Activated CD4-positive, alpha-beta memory T cell treated with anti-CD3 and anti-CD28 coated beads, Interleukin-2, amount 10 ng/mL, durations not matched to agents 7 days and 5 days (primary cell): ENCODE measurements at regions of chr18 and their contacts with region 1.

Region 1: GRCh38 chr18:12890506-12890905 is 6.5 kb upstream of the PTPN2 start:
- DNase-seq: no peak
- H3K4me3 Mint-ChIP-seq: no peak overlapping the region
- H3K27ac Mint-ChIP-seq: no peak overlapping the region
- H3K4me1 Mint-ChIP-seq: peaks cover 17% of the 10 kb centered on the region
- H3K27me3 Mint-ChIP-seq: peaks cover 11% of the 10 kb centered on the region

Region 2: DNA sequence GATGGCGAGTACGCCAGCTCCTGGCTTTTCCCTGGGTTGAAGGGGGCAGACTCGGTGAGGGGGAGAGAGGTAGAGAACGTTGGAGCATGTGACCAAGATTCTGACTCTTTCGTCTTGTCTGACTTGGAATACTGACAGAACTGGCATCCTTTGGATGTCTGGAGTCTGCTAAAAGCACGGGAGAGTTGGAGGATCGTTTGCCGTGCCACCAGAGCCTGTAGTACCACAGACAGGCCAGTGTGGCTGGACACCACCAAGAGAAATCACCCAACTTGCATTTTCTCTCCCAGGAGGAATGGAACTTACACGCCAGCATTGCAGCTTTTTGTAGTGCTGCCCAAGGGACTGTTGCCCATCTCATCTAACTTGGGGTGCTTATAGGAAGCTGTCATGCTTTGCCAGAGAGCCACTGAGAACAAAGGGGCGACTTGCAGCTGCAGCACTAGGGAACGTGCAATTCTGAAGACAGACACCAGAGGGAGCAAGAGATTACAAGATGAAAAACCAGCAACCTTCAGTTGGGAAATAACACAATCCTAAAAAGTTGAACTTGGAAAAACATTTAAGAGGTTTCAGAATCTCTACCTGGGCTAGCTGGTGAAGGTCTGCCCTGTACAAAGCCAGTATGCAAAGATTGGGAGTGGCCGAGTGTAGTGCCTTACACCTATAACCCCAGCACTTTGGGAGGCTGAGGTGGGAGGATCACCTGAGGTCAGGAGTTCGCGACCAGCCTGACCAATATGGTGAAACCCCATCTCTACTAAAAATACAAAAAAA is 163.5 kb before region 1 on chr18:
- CTCF ChIA-PET with region 1: interaction called, 10 read pairs
- POLR2A ChIA-PET with region 1: interaction called, 3 read pairs
- DNase-seq: peak; percentile 47
- H3K4me3 Mint-ChIP-seq: no peak overlapping the region
- H3K27ac Mint-ChIP-seq: no peak overlapping the region
- H3K4me1 Mint-ChIP-seq: peaks cover 7% of the 10 kb centered on the region
- H3K27me3 Mint-ChIP-seq: no peaks in the 10 kb centered on the region

Region 3: DNA sequence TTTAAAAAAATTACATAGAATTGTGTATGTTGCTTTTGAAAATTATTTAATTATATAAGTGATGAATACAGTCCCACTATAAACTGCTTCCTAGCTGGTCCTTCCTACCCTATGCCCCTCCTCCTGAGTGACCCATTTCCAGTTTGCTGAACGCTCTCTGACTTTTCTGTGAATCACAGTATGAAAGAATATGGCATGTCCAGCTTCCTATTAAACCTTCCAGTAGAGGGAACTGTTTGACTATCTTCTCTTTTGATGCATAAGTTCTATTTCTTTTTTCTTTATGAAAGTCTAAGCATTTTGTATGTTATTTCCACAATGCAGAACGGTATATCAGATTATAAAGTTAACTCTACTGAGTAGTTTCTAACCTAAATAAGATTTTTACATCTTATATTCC is 146.4 kb before region 1 on chr18:
- CTCF ChIA-PET with region 1: interaction called, 44 read pairs
- POLR2A ChIA-PET with region 1: no interaction called
- DNase-seq: no peak
- H3K4me3 Mint-ChIP-seq: no peak overlapping the region
- H3K27ac Mint-ChIP-seq: no peak overlapping the region
- H3K4me1 Mint-ChIP-seq: peaks cover under 1% of the 10 kb centered on the region
- H3K27me3 Mint-ChIP-seq: peaks cover 2% of the 10 kb centered on the region

Region 4: GRCh38 chr18:12904012-12904516 is 13.6 kb after region 1 on chr18:
- CTCF ChIA-PET with region 1: interaction called, 24 read pairs
- POLR2A ChIA-PET with region 1: interaction called, 3 read pairs
- DNase-seq: peak; percentile 85
- H3K4me3 Mint-ChIP-seq: peak overlapping the region; percentile 52
- H3K27ac Mint-ChIP-seq: peak overlapping the region; percentile 75
- H3K4me1 Mint-ChIP-seq: peaks cover 9% of the 10 kb centered on the region
- H3K27me3 Mint-ChIP-seq: peaks cover 18% of the 10 kb centered on the region